Dendritic cell treated with granulocyte-macrophage colony-stimulating factor and Interleukin-4, amounts not matched to agents 40 ng/mL and 50 ng/mL, for 4 days (primary cell): ENCODE measurements at regions of chr17 and their contacts with region 1.

Region 1: GRCh38 chr17:69428254-69428980 is 13.9 kb downstream of the MAP2K6 start:
- H3K4me3 Mint-ChIP-seq: no peak overlapping the region
- H3K27ac Mint-ChIP-seq: peak overlapping the region; percentile 82
- H3K4me1 Mint-ChIP-seq: peaks cover 44% of the 10 kb centered on the region
- H3K27me3 Mint-ChIP-seq: no peaks in the 10 kb centered on the region

Region 2: DNA sequence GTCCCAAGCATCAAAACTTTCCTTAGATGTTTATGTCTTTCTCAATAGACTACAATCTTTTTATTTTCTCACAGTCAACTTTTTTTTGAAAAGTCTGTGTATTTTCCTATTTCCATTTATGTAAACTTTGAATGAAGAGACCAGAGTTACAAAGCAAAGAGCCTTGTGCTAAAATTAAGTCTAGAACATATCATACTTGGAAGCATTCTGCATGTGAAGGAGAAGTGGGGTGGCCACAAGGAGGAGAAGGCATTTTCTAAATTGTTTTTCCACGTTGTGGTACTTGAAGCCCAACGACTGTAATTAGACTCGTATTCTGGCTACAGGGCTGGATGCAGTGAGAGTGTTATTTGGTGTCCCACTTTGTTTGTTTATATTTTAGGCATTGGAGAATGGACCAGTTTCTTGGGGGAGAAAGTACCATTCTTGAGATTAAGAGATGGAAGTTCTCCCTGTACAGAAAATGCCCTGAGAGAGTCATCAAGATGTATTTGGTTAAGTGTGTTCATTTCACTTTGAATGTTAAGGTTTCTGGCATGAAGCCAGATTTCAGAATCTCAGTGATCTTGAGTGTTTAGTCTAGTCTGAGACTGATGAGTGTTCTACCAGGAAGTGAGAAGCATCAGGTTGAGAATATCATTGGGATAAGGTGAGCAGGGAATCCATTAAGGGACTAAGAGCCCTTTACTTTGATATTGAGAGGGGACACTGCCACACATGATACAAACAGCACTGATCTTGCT is 57.7 kb after region 1 on chr17:
- intact Hi-C with region 1: loop called (anchors 10 kb)
- H3K4me3 Mint-ChIP-seq: no peak overlapping the region
- H3K27ac Mint-ChIP-seq: peak overlapping the region; percentile 21
- H3K4me1 Mint-ChIP-seq: peaks cover 33% of the 10 kb centered on the region
- H3K27me3 Mint-ChIP-seq: no peaks in the 10 kb centered on the region